Naive thymus-derived CD4-positive, alpha-beta T cell (primary cell): ENCODE measurements at regions of chr12 and their contacts with region 1.

Region 1: GRCh38 chr12:1093166-1093751 is 102.2 kb downstream of the ERC1 start:
- DNase-seq: peak in 7 of 9 donors; percentile 29 to 63 (median 43)
- ATAC-seq: peak; percentile 78
- H3K4me3 ChIP-seq: no peak overlapping the region
- H3K4me3 Mint-ChIP-seq: no peak overlapping the region
- H3K27ac ChIP-seq: no peak overlapping the region
- H3K27ac Mint-ChIP-seq: no peak overlapping the region
- H3K4me1 ChIP-seq: no peaks in the 10 kb centered on the region
- H3K4me1 Mint-ChIP-seq: peaks cover 5 to 30% (median 7%) of the 10 kb centered on the region in 7 donors
- H3K27me3 ChIP-seq: no peaks in the 10 kb centered on the region
- H3K27me3 Mint-ChIP-seq: no peaks in the 10 kb centered on the region

Region 2: DNA sequence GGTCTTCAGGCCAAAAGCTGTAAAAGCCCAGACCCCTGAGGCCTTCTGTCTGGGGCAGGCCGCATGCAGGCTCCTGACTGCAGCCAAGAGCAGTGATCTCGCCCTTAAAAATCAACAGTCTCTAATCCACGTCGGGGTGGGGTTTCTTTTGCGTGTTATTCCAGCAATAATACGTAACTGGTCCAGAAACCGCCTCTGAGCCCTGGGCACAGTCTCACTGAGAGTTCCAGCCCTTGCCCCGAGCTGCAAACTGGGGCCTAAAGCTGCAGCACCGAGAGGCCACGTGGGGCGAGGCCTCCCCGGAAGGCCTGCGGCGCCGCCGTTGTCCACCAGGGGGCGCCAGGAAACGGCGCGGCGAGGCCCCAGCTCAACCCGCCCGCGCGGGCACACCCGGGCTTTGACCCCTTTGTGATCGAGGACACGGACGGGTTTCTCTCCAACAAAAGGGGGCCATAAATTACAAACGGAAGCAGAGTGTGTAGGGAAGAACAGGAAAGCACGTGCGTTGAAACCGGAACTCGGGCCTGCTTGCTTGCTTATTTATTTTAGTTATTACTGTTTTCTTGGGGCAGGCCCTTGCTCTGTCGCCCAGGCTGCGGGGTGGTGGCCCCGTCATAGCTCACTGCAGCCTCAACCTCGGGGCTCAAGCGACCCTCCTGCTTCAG is 517.2 kb before region 1 on chr12:
- CTCF ChIA-PET with region 1: no interaction called
- POLR2A ChIA-PET with region 1: no interaction called
- intact Hi-C with region 1: loop called (anchors 5 to 10 kb)
- DNase-seq: peak; percentile 63 to 97 (median 83)
- ATAC-seq: peak; percentile 99
- H3K4me3 ChIP-seq: no peak overlapping the region
- H3K4me3 Mint-ChIP-seq: peak overlapping the region; percentile 14 to 70 (median 56)
- H3K27ac ChIP-seq: no peak overlapping the region
- H3K27ac Mint-ChIP-seq: peak overlapping the region in 7 of 9 donors; percentile 44 to 89 (median 76)
- H3K4me1 ChIP-seq: peaks cover 11 to 16% of the 10 kb centered on the region in 2 donors
- H3K4me1 Mint-ChIP-seq: peaks cover 10 to 38% (median 19%) of the 10 kb centered on the region in 7 donors
- H3K27me3 ChIP-seq: no peaks in the 10 kb centered on the region
- H3K27me3 Mint-ChIP-seq: peaks cover 0 to 1% (median 0%) of the 10 kb centered on the region in 5 donors

Region 3: DNA sequence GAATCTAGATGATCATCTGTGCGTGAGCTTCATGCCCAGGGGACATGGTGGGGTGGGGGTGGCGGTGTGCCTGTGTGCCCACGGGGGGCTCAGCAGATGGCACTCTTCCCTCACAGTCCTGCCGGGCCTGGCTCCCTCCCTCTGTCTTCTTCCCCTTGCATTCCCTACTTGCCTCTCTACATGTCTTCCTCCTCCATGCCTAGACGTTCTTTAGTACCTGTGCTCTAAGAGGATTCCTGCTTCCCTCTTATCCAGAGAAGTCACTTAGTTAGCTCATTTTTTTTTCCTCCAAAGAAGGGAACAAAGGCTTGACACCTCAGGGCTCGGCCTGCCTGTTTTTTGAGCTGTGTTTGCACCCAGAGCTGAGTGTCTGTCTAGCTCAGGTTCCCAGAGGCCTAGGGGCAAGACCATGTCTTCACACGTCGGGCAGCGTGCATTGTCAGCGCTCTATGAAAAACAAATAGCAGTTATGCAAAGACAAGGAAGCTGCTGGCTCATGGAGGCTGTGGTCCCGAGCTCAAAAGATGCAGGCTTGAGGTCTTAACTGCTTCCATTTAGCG is 478.8 kb before region 1 on chr12:
- CTCF ChIA-PET with region 1: no interaction called
- POLR2A ChIA-PET with region 1: no interaction called
- intact Hi-C with region 1: loop called in 1 of 2 experiments (anchors 10 kb)
- DNase-seq: peak in 4 of 9 donors; percentile 16 to 40 (median 32)
- ATAC-seq: peak; percentile 30
- H3K4me3 ChIP-seq: no peak overlapping the region
- H3K4me3 Mint-ChIP-seq: no peak overlapping the region
- H3K27ac ChIP-seq: no peak overlapping the region
- H3K27ac Mint-ChIP-seq: peak overlapping the region in 5 of 9 donors; percentile 30 to 70 (median 51)
- H3K4me1 ChIP-seq: peaks cover 6 to 19% of the 10 kb centered on the region in 2 donors
- H3K4me1 Mint-ChIP-seq: peaks cover 29 to 56% (median 43%) of the 10 kb centered on the region in 7 donors
- H3K27me3 ChIP-seq: no peaks in the 10 kb centered on the region
- H3K27me3 Mint-ChIP-seq: no peaks in the 10 kb centered on the region

Region 4: GRCh38 chr12:818733-819132 is 274.5 kb before region 1 on chr12:
- CTCF ChIA-PET with region 1: interaction called, 12 read pairs
- POLR2A ChIA-PET with region 1: no interaction called
- intact Hi-C with region 1: loop called (anchors 5 kb)
- DNase-seq: no peak
- ATAC-seq: no peak
- H3K4me3 ChIP-seq: no peak overlapping the region
- H3K4me3 Mint-ChIP-seq: no peak overlapping the region
- H3K27ac ChIP-seq: no peak overlapping the region
- H3K27ac Mint-ChIP-seq: peak overlapping the region in 5 of 9 donors; percentile 2 to 55 (median 19)
- H3K4me1 ChIP-seq: peaks cover 4 to 9% of the 10 kb centered on the region in 2 donors
- H3K4me1 Mint-ChIP-seq: peaks cover 25 to 72% (median 69%) of the 10 kb centered on the region in 7 donors
- H3K27me3 ChIP-seq: no peaks in the 10 kb centered on the region
- H3K27me3 Mint-ChIP-seq: no peaks in the 10 kb centered on the region

Region 5: DNA sequence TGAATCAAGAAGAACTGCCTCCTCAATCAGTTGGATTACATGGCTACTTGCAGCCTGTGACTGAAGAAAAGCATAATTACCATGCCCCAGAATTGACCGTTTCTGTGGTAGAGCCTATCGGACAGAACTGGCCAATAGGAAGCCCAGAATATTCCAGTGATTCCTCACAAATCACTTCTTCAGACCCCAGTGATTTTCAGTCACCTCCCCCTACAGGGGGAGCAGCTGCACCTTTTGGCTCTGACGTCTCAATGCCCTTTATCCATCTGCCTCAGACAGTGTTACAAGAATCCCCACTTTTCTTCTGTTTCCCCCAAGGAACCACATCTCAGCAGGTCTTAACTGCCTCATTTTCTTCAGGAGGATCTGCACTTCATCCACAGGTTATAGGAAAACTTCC is 224.5 kb before region 1 on chr12:
- CTCF ChIA-PET with region 1: no interaction called
- POLR2A ChIA-PET with region 1: no interaction called
- intact Hi-C with region 1: loop called in 1 of 2 experiments (anchors 5 kb)
- DNase-seq: no peak
- ATAC-seq: no peak
- H3K4me3 ChIP-seq: no peak overlapping the region
- H3K4me3 Mint-ChIP-seq: no peak overlapping the region
- H3K27ac ChIP-seq: no peak overlapping the region
- H3K27ac Mint-ChIP-seq: peak overlapping the region in 3 of 9 donors; percentile 24 to 60 (median 53)
- H3K4me1 ChIP-seq: peaks cover 6 to 14% of the 10 kb centered on the region in 2 donors
- H3K4me1 Mint-ChIP-seq: peaks cover 2 to 27% (median 18%) of the 10 kb centered on the region in 7 donors
- H3K27me3 ChIP-seq: no peaks in the 10 kb centered on the region
- H3K27me3 Mint-ChIP-seq: no peaks in the 10 kb centered on the region

Region 6: GRCh38 chr12:905261-906031 is 187.8 kb before region 1 on chr12:
- CTCF ChIA-PET with region 1: interaction called, 3 read pairs
- POLR2A ChIA-PET with region 1: no interaction called
- intact Hi-C with region 1: loop called in 1 of 2 experiments (anchors 10 kb)
- DNase-seq: peak in 4 of 9 donors; percentile 8 to 33 (median 22)
- ATAC-seq: peak; percentile 73
- H3K4me3 ChIP-seq: no peak overlapping the region
- H3K4me3 Mint-ChIP-seq: peak overlapping the region; percentile 2 to 70 (median 53)
- H3K27ac ChIP-seq: peak overlapping the region; percentile 19
- H3K27ac Mint-ChIP-seq: peak overlapping the region; percentile 41 to 83 (median 74)
- H3K4me1 ChIP-seq: peaks cover 0 to 7% of the 10 kb centered on the region in 2 donors
- H3K4me1 Mint-ChIP-seq: peaks cover 10 to 48% (median 36%) of the 10 kb centered on the region in 7 donors
- H3K27me3 ChIP-seq: no peaks in the 10 kb centered on the region
- H3K27me3 Mint-ChIP-seq: no peaks in the 10 kb centered on the region

Region 7: GRCh38 chr12:990661-991349 is 102.5 kb before region 1 on chr12 and contains the start of gene ERC1:
- CTCF ChIA-PET with region 1: interaction called, 3 read pairs
- POLR2A ChIA-PET with region 1: no interaction called
- intact Hi-C with region 1: loop called in 1 of 2 experiments (anchors 10 kb)
- DNase-seq: peak; percentile 77 to 93 (median 87)
- ATAC-seq: peak; percentile 94
- H3K4me3 ChIP-seq: peak within 1 kb of the TSS; percentile 89
- H3K4me3 Mint-ChIP-seq: peak within 1 kb of the TSS; percentile 86 to 100 (median 97)
- H3K27ac ChIP-seq: peak within 1 kb of the TSS; percentile 87
- H3K27ac Mint-ChIP-seq: peak within 1 kb of the TSS; percentile 89 to 98 (median 96)
- H3K4me1 ChIP-seq: peaks cover 0 to 17% of the 10 kb centered on the region in 2 donors
- H3K4me1 Mint-ChIP-seq: peaks cover 34 to 55% (median 46%) of the 10 kb centered on the region in 7 donors
- H3K27me3 ChIP-seq: no peaks in the 10 kb centered on the region
- H3K27me3 Mint-ChIP-seq: no peaks in the 10 kb centered on the region
- total RNA-seq, gene ERC1: 48.6 to 62.0 (median 52.4) TPM